Transverse colon (tissue), 4 donors: ENCODE measurements at regions of chr7 and their contacts with region 1.

Region 1: DNA sequence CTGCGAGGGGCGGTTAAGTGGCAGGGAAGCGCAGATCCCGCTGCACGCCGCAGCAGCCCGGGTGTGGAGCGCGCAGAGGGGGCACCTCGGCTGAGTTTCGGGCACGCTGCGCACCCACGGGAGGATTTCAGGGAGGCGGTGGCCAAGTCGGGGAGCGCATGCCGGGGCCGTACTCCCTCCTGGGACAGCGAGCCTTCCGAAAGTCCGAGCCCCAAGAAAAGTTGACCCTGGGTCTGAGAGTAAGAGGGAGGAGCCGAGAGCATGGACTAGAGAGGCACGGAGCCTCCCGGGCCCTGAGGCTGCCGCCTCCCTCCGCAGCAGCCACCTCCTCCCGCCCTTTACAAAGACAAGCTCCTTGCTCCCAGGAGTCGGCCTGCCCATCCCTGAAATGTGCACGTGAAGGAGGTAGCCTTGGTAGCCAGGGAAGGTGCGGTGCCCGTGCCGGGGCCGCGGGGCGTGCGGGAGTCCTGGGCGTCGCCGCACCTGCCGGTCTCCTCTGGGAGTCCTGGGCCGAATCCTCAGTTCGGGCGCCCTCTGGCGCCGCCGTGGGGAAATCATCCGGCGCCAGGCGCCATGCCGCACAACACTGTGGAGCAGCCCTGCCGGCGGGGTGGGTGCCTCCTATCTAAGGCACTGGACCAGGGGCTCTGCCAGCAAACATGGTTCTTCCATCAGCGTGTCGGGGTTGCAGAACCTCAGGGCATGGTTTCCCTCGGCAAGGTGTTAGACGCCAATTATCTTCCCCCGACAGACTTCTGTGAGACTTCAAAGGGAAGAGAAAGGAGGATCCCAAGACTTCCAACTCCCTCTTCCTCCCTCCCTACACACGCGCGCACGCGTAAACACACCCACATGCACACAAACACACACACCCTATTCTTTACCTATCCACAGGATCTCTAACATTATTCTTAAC is 104.0 kb downstream of the TRIL start:
- DNase-seq: peak; percentile 84
- H3K4me3 ChIP-seq: peak overlapping the region; percentile 31 to 62 (median 40)
- H3K27ac ChIP-seq: no peak overlapping the region
- H3K4me1 ChIP-seq: peaks cover 0 to 15% (median 4%) of the 10 kb centered on the region in 4 donors
- H3K27me3 ChIP-seq: peaks cover 44% of the 10 kb centered on the region
- CTCF ChIP-seq: peak; percentile 81 to 90 (median 88)
- EP300 ChIP-seq: no peak
- POLR2A ChIP-seq: no peak

Region 2: DNA sequence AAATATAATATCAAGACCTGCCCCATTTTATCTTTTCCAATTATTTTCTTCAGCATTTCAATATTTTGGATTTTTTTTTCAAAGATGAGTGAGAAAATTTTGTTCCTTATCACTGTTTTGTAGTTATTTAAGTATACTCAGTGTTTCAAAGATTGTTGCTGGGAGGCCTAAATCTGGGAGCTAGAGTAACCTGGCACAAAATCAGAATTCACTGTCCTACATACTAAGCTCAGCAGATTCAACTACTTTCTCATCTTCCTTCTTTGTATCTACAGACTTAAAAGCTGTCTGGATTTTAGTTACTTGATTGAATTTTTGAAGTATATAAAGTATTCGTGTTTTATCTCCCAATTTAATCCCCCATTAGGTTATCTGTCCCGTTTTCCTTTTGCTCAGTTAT is 1028.2 kb before region 1 on chr7:
- in situ Hi-C with region 1: no loop called
- intact Hi-C with region 1: no loop called
- DNase-seq: no peak
- H3K4me3 ChIP-seq: no peak overlapping the region
- H3K27ac ChIP-seq: no peak overlapping the region
- H3K4me1 ChIP-seq: no peaks in the 10 kb centered on the region
- H3K27me3 ChIP-seq: no peaks in the 10 kb centered on the region
- CTCF ChIP-seq: no peak
- EP300 ChIP-seq: no peak
- POLR2A ChIP-seq: no peak

Region 3: GRCh38 chr7:28298870-28299518 is 555.1 kb before region 1 on chr7:
- in situ Hi-C with region 1: loop called in 1 of 4 experiments (anchors 25 kb)
- intact Hi-C with region 1: no loop called
- DNase-seq: no peak
- H3K4me3 ChIP-seq: no peak overlapping the region
- H3K27ac ChIP-seq: no peak overlapping the region
- H3K4me1 ChIP-seq: no peaks in the 10 kb centered on the region
- H3K27me3 ChIP-seq: no peaks in the 10 kb centered on the region
- CTCF ChIP-seq: peak; percentile 20 to 34 (median 26)
- EP300 ChIP-seq: no peak
- POLR2A ChIP-seq: no peak

Region 4: GRCh38 chr7:29035044-29035740 is 181.1 kb after region 1 on chr7:
- in situ Hi-C with region 1: no loop called
- intact Hi-C with region 1: no loop called
- DNase-seq: no peak
- H3K4me3 ChIP-seq: no peak overlapping the region
- H3K27ac ChIP-seq: no peak overlapping the region
- H3K4me1 ChIP-seq: peaks cover 0 to 22% (median 9%) of the 10 kb centered on the region in 4 donors
- H3K27me3 ChIP-seq: no peaks in the 10 kb centered on the region
- CTCF ChIP-seq: no peak
- EP300 ChIP-seq: no peak
- POLR2A ChIP-seq: no peak